Ovary (tissue), 10 donors: ENCODE measurements at regions of chr13 and their contacts with region 1.

Region 1: DNA sequence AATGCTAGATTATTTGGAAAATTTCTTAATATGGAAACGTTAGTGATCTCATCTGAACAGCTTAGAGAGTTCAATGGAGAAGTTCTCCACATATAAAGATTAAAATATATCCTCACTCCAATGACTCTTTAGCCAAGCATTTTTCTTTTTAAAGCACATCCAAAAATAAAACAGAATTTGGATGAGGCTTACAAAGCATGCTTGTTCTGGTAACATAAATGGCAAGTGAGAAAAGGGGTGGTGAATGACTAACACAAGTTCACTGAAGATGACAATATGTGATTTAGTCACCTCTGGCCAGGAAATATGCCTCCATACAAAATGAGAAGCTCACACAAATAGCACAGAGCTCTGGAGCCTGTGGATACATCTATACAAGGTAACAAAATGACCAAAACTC is 253.0 kb downstream of the PCDH20 start:
- DNase-seq: no peak
- H3K4me3 ChIP-seq: no peak overlapping the region
- H3K27ac ChIP-seq: no peak overlapping the region
- H3K4me1 ChIP-seq: no peaks in the 10 kb centered on the region
- H3K27me3 ChIP-seq: no peaks in the 10 kb centered on the region
- CTCF ChIP-seq: no peak
- EP300 ChIP-seq: no peak
- POLR2A ChIP-seq: no peak

Region 2: GRCh38 chr13:61179741-61180140 is 17.1 kb after region 1 on chr13:
- intact Hi-C with region 1: loop called in 1 of 4 experiments (anchors 2 kb)
- DNase-seq: no peak
- H3K4me3 ChIP-seq: no peak overlapping the region
- H3K27ac ChIP-seq: no peak overlapping the region
- H3K4me1 ChIP-seq: no peaks in the 10 kb centered on the region
- H3K27me3 ChIP-seq: no peaks in the 10 kb centered on the region
- CTCF ChIP-seq: no peak
- EP300 ChIP-seq: no peak
- POLR2A ChIP-seq: no peak